Activated naive CD4-positive, alpha-beta T cell treated with anti-CD3 and anti-CD28 coated beads for 36 hours (primary cell): ENCODE measurements at regions of chr19 and their contacts with region 1.

Region 1: GRCh38 chr19:35949131-35949530 is 13.0 kb downstream of the LRFN3 start:
- DNase-seq: no peak
- H3K4me3 Mint-ChIP-seq: no peak overlapping the region
- H3K27ac Mint-ChIP-seq: no peak overlapping the region
- H3K4me1 Mint-ChIP-seq: peaks cover 29% of the 10 kb centered on the region
- H3K27me3 Mint-ChIP-seq: no peaks in the 10 kb centered on the region

Region 2: DNA sequence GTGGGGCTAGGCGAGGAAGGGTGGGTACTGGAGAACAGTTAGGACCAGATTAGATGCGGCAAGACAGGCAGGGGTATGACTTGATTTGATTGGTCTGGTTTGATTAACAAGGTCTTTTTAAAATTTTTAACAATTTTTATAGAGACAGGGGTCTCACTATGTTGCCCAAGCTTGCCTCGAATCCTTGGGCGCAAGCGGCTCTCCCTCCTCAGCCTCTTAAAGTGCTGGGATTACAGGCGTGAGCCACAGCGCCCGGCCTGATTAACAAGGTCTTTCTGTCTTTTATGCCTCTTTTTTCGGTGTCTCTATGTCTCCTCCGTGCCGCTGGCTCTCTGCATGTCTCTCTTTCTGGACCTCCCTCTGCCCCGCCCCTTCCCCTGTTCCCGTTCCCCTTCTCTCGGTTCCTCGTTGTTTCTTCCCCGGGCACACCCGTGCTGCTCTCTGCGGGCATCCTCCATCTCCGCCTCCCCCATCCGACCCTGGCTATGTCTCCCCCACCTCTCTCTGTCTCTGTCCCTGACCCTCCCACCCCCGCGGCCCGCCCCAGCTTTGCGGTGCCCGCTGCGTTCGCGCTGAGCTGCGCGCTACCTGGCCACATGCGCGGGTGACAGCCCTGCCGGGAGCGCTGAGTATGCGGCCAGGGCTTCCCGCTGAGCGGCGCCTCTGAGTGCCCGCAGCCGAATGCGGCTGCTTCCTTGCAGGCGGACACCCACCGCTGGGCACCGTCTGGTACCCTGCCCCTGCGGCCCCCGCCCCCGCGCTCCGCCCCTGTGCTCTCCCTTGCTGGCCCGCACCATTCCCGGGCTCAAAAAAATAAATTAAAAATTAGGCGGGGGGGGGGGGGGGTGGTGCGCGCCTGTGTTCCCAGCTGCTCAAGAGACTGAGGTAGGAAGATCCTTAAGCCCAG is 37.8 kb after region 1 on chr19:
- CTCF ChIA-PET with region 1: no interaction called
- intact Hi-C with region 1: loop called (anchors 2 kb)
- DNase-seq: peak; percentile 39
- H3K4me3 Mint-ChIP-seq: peak overlapping the region; percentile 76
- H3K27ac Mint-ChIP-seq: no peak overlapping the region
- H3K4me1 Mint-ChIP-seq: peaks cover 5% of the 10 kb centered on the region
- H3K27me3 Mint-ChIP-seq: peaks cover 40% of the 10 kb centered on the region